ENCODE measurements at regions of chr11 and their contacts with region 1.

Region 1: GRCh38 chr11:441418-442274 is at the start of gene ANO9:
- DNase-seq: peak; percentile 78
- ATAC-seq: peak; percentile 93
- H3K4me3 Mint-ChIP-seq: peak within 1 kb of the TSS; percentile 72
- H3K27ac Mint-ChIP-seq: no peak within 1 kb of the TSS
- H3K4me1 Mint-ChIP-seq: peaks cover 22% of the 10 kb centered on the region
- H3K27me3 Mint-ChIP-seq: no peaks in the 10 kb centered on the region
- CTCF ChIP-seq: no peak
- total RNA-seq, gene ANO9: 28.2 to 29.0 TPM

Region 2: GRCh38 chr11:396948-397548 is 44.6 kb before region 1 on chr11:
- CTCF ChIA-PET with region 1: no interaction called
- POLR2A ChIA-PET with region 1: no interaction called
- intact Hi-C with region 1: no loop called
- DNase-seq: peak; percentile 67
- ATAC-seq: peak; percentile 81
- H3K4me3 Mint-ChIP-seq: no peak overlapping the region
- H3K27ac Mint-ChIP-seq: no peak overlapping the region
- H3K4me1 Mint-ChIP-seq: peaks cover 7% of the 10 kb centered on the region
- H3K27me3 Mint-ChIP-seq: peaks cover 5% of the 10 kb centered on the region
- CTCF ChIP-seq: no peak

Region 3: GRCh38 chr11:426721-427250 is 14.9 kb before region 1 on chr11:
- CTCF ChIA-PET with region 1: interaction called, 4 read pairs
- POLR2A ChIA-PET with region 1: interaction called, 10 read pairs
- intact Hi-C with region 1: no loop called
- DNase-seq: no peak
- ATAC-seq: no peak
- H3K4me3 Mint-ChIP-seq: no peak overlapping the region
- H3K27ac Mint-ChIP-seq: no peak overlapping the region
- H3K4me1 Mint-ChIP-seq: no peaks in the 10 kb centered on the region
- H3K27me3 Mint-ChIP-seq: no peaks in the 10 kb centered on the region
- CTCF ChIP-seq: no peak

Region 4: GRCh38 chr11:469684-470560 is 28.3 kb after region 1 on chr11:
- CTCF ChIA-PET with region 1: no interaction called
- POLR2A ChIA-PET with region 1: no interaction called
- intact Hi-C with region 1: no loop called
- DNase-seq: no peak
- ATAC-seq: no peak
- H3K4me3 Mint-ChIP-seq: no peak overlapping the region
- H3K27ac Mint-ChIP-seq: no peak overlapping the region
- H3K4me1 Mint-ChIP-seq: no peaks in the 10 kb centered on the region
- H3K27me3 Mint-ChIP-seq: no peaks in the 10 kb centered on the region
- CTCF ChIP-seq: no peak

Measured in activated CD8-positive, alpha-beta T cell treated with anti-CD3 and anti-CD28 coated beads for 36 hours (primary cell).